Activated CD4-positive, alpha-beta T cell treated with anti-CD3 and anti-CD28 coated beads for 36 hours (primary cell): ENCODE measurements at regions of chr4 and their contacts with region 1.

Region 1: GRCh38 chr4:6640292-6641163 is at the start of gene MRFAP1:
- DNase-seq: peak; percentile 97
- ATAC-seq: peak; percentile 86
- H3K4me3 Mint-ChIP-seq: peak within 1 kb of the TSS; percentile 96
- H3K27ac Mint-ChIP-seq: peak within 1 kb of the TSS; percentile 100
- H3K4me1 Mint-ChIP-seq: peaks cover 27% of the 10 kb centered on the region
- H3K27me3 Mint-ChIP-seq: no peaks in the 10 kb centered on the region
- total RNA-seq, gene MRFAP1: 66.8 to 122 TPM

Region 2: DNA sequence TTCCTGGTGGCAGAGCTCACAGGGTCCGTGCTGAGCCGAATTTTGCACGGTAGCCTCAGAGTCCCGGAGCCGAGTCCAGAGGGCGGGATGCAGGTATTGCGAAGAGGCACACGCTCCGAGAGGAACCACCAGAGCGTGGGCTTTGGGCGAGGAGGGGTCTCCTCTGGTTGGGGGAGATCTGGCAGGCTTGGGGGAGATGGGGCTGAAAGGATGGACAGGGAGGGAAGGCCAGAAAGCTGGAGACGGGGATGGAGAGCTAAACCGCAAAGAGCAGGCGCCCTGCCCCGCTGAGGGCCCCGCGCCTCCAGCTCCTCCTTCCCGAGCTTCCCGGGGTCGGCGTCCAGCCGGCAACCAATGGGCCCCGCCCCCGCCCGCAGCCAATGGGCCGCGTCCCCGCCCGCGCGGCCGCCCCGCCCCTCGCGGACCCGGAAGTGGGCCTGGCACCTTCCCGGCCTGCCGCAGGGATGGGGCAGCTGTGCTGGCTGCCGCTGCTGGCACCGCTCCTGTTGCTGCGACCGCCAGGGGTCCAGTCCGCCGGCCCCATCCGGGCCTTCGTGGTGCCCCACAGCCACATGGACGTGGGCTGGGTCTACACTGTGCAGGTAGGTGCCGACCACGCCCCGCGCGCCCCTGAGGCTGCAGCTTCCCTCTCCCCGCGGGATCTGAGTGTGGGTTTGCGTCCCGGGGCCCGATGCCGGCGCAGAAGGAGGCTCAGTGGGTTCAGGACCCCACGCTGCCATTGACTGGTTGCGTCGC is 65.6 kb before region 1 on chr4 and contains the start of gene MAN2B2:
- CTCF ChIA-PET with region 1: no interaction called
- POLR2A ChIA-PET with region 1: interaction called, 3 read pairs
- intact Hi-C with region 1: loop called in 1 of 2 experiments (anchors 1 kb)
- DNase-seq: peak; percentile 89
- ATAC-seq: peak; percentile 96
- H3K4me3 Mint-ChIP-seq: peak within 1 kb of the TSS; percentile 78
- H3K27ac Mint-ChIP-seq: peak within 1 kb of the TSS; percentile 74
- H3K4me1 Mint-ChIP-seq: peaks cover 6% of the 10 kb centered on the region
- H3K27me3 Mint-ChIP-seq: no peaks in the 10 kb centered on the region
- total RNA-seq, gene MAN2B2: 13.0 to 14.6 TPM

Region 3: DNA sequence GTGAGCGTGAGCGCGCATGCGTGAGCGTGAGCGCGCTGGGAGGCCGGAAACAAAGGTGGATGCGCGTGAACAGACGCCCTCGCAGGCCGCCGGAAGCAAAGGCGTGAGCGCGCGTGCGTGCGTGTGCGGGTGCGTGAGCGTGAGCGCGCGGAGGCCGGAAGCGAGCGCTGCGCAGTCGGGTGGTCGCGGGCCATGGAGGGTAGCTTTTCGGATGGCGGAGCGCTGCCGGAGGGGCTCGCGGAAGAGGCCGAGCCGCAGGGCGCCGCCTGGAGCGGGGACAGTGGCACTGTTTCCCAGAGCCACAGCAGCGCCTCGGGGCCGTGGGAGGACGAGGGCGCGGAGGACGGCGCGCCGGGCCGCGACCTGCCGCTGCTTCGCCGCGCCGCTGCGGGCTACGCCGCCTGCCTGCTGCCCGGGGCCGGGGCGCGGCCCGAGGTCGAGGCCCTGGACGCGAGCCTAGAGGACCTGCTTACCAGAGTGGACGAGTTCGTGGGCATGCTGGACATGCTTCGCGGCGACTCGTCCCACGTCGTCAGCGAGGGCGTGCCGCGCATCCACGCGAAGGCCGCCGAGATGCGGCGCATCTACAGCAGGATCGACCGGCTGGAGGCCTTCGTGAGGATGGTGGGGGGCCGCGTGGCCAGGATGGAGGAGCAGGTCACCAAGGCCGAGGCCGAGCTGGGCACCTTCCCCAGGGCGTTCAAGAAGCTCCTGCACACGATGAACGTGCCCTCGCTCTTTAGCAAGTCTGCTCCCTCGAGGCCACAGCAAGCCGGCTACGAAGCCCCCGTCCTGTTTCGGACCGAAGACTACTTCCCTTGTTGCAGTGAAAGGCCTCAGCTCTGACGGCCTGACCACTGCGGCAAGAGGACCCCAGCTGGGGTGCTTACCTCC is 75.7 kb after region 1 on chr4 and contains the start of gene BLOC1S4:
- CTCF ChIA-PET with region 1: interaction called, 6 read pairs
- POLR2A ChIA-PET with region 1: interaction called, 3 read pairs
- intact Hi-C with region 1: loop called (anchors 1 kb)
- DNase-seq: peak; percentile 93
- ATAC-seq: peak; percentile 80
- H3K4me3 Mint-ChIP-seq: peak within 1 kb of the TSS; percentile 92
- H3K27ac Mint-ChIP-seq: peak within 1 kb of the TSS; percentile 92
- H3K4me1 Mint-ChIP-seq: peaks cover 27% of the 10 kb centered on the region
- H3K27me3 Mint-ChIP-seq: no peaks in the 10 kb centered on the region
- total RNA-seq, gene BLOC1S4: 10.1 to 16.7 TPM